ENCODE measurements at regions of chr3 and their contacts with region 1.

Region 1: DNA sequence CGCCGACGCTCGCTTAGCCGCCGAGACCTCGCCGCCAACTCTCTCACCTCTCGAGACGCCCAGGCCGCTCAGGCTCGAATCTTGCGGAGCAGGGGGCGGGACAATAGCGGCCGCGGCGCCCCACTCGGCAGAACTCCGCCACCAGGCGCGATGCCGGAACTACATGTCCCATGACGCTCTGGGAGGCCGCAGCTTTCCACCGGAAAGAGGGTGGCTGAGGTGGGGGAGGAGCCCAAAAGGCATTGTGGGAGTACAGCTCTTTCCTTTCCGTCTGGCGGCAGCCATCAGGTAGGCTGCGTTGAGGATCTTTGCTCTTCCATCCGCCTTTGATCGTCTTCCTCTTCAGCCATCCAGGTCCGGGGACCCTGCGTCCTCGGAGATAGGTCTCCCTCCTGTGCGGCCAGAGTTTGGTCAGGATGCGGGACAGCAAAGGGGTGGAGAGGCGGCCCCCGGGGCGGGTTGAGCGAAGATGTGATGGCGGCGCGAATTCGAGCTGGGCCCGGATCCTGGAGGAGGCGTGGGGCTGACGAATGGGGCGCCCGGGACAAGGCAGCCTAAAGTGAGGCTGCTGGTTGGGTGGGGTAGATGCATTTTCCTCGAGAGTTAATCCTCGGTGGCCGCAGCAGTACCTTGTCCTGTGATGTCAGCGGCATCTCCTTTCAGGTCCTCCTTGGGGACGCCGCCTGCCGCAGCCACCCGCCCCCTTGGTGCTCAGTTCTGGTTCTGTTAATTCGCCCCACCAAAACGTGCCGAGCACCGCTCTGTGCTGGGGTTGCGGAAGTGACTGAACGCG is at the starts of genes NKIRAS1 and RPL15:
- DNase-seq: peak; percentile 84 to 95
- H3K4me3 ChIP-seq: peak within 1 kb of the TSS; percentile 91
- H3K27ac ChIP-seq: peak within 1 kb of the TSS; percentile 84
- H3K4me1 ChIP-seq: peaks cover 52% of the 10 kb centered on the region
- H3K27me3 ChIP-seq: no peaks in the 10 kb centered on the region
- CTCF ChIP-seq: peak; percentile 61
- total RNA-seq, gene NKIRAS1: 8.6 and 12.6 TPM in 2 replicates
- total RNA-seq, gene RPL15: 1,784 and 1,876 TPM in 2 replicates

Region 2: GRCh38 chr3:23036728-23037127 is 880.4 kb before region 1 on chr3:
- CTCF ChIA-PET with region 1: no interaction called
- POLR2A ChIA-PET with region 1: no interaction called
- intact Hi-C with region 1: no loop called
- DNase-seq: no peak
- H3K4me3 ChIP-seq: no peak overlapping the region
- H3K27ac ChIP-seq: no peak overlapping the region
- H3K4me1 ChIP-seq: peaks cover 11% of the 10 kb centered on the region; the same call in 1 of the 2 replicates
- H3K27me3 ChIP-seq: no peaks in the 10 kb centered on the region
- CTCF ChIP-seq: no peak

Region 3: DNA sequence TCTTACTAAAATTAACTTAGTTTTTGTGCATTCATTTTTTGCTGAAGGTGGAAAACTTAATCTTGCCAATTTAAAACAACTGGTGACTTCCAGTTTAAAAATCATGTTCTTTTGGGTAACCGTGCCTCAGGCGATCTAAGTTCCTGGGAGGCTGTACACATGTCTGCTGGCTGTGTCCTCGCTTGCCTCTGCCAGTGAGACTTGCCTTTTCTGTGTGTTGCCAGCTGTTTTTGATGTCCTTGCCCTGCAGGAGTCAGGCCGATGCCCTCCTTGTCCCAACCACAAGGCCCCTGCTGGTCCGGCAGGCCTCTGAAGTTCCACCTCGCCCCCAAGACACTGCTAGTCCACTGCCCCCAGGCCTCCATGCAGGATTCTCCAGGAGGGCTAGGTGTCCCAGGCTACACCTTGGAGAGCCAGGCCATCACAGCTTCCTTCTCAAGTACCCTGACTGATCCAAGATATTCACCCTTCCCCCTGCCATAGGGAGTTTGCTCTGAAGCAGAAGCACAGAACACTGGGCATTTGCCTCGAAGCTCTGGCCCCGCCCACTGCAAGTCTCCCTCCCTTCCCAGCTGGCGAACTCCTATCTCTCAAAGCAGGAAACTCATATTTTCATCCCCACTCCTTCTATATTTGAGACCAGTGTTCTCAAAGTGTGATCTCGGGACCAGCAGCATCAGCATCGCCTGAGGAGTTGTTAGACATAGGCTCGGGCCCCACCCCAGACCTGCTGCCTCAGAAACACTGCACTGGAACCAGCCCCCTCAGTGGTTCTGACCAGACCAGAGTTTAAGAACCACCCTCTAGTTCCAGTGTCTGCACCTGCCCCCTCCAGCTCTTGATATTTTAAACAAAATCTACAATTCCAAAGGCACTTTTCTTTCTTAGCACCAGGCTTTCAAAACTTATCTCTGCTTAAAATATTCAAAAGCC is 297.1 kb before region 1 on chr3:
- CTCF ChIA-PET with region 1: no interaction called
- POLR2A ChIA-PET with region 1: no interaction called
- intact Hi-C with region 1: no loop called
- DNase-seq: no peak
- H3K4me3 ChIP-seq: no peak overlapping the region
- H3K27ac ChIP-seq: no peak overlapping the region
- H3K4me1 ChIP-seq: no peaks in the 10 kb centered on the region
- H3K27me3 ChIP-seq: no peaks in the 10 kb centered on the region
- CTCF ChIP-seq: no peak

Region 4: GRCh38 chr3:23959135-23959900 is 42.2 kb after region 1 on chr3:
- CTCF ChIA-PET with region 1: no interaction called
- POLR2A ChIA-PET with region 1: interaction called, 5 read pairs
- intact Hi-C with region 1: loop called (anchors 1 kb)
- DNase-seq: peak; percentile 65 to 97
- H3K4me3 ChIP-seq: no peak overlapping the region
- H3K27ac ChIP-seq: peak overlapping the region; percentile 94
- H3K4me1 ChIP-seq: peaks cover 49% of the 10 kb centered on the region
- H3K27me3 ChIP-seq: no peaks in the 10 kb centered on the region
- CTCF ChIP-seq: no peak

Region 5: DNA sequence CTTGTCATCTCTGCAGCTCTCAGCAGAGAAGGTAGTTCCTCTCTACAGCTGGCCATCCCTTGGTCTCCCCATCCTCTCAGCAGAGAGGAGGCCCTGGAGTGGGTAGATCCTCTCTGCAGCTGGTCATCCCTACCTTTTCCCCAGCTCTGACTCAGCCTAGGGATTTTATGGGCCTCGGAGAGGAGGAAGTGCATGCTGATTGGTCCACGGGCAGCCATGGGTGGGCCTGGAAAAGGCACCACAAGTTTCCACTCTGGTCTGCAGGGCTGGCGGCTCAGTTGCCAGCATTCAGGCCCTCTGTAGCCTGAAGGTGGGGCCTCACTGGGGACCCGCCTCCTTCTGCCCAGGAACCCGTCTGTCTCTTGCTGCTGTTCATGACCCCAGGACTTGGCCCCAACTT is 64.9 kb after region 1 on chr3:
- CTCF ChIA-PET with region 1: no interaction called
- POLR2A ChIA-PET with region 1: no interaction called
- intact Hi-C with region 1: no loop called
- DNase-seq: no peak
- H3K4me3 ChIP-seq: no peak overlapping the region
- H3K27ac ChIP-seq: no peak overlapping the region
- H3K4me1 ChIP-seq: no peaks in the 10 kb centered on the region
- H3K27me3 ChIP-seq: no peaks in the 10 kb centered on the region
- CTCF ChIP-seq: no peak

Region 6: DNA sequence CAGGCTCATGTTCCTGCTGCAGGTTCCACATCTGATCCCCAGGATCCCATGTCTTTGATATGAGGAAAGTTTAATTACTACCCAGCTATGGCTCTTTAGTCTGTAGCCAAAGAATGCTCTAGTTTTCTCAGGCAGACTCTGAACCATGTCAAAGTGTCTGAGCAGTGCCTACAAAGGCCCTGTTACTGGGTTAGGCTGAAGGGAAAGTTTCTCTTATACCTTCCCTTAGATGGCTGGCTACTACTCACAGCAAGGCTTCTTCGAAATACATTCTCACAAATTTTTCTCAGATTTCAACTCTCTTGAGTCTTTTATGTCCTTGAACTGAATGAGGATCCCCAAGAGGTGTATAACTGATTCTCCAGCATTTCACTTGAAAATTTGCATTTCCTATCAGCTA is 130.4 kb after region 1 on chr3:
- CTCF ChIA-PET with region 1: no interaction called
- POLR2A ChIA-PET with region 1: interaction called, 11 read pairs
- intact Hi-C with region 1: no loop called
- DNase-seq: no peak
- H3K4me3 ChIP-seq: no peak overlapping the region
- H3K27ac ChIP-seq: peak overlapping the region; percentile 70
- H3K4me1 ChIP-seq: peaks cover 16% of the 10 kb centered on the region
- H3K27me3 ChIP-seq: no peaks in the 10 kb centered on the region
- CTCF ChIP-seq: no peak

Region 7: DNA sequence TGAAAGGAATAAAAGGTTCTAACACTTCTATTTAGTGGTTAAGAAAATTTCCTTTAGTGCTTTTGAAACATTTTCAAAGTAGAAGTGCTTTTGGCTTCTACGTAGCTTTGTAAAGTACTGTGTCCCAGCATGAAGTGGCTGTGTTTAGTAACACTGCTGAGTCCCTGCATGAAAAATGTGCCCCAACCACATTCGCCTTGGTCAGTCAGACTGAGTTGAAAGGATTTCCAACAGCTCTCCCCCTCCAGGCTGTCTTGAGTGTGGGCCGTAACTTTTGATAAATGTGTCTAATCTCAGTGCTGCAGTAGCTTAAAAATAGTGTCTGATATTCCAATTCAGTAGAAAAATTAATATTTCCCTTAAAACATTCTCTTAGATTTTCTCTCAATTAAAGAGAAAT is 143.0 kb after region 1 on chr3:
- CTCF ChIA-PET with region 1: no interaction called
- POLR2A ChIA-PET with region 1: no interaction called
- intact Hi-C with region 1: no loop called
- DNase-seq: peak; percentile 58 to 61
- H3K4me3 ChIP-seq: no peak overlapping the region
- H3K27ac ChIP-seq: no peak overlapping the region
- H3K4me1 ChIP-seq: peaks cover 8% of the 10 kb centered on the region; the same call in 1 of the 2 replicates
- H3K27me3 ChIP-seq: no peaks in the 10 kb centered on the region
- CTCF ChIP-seq: no peak

Measured in PC-9 (cell line).